ENCODE measurements at regions of chr2 and their contacts with region 1.

Region 1: DNA sequence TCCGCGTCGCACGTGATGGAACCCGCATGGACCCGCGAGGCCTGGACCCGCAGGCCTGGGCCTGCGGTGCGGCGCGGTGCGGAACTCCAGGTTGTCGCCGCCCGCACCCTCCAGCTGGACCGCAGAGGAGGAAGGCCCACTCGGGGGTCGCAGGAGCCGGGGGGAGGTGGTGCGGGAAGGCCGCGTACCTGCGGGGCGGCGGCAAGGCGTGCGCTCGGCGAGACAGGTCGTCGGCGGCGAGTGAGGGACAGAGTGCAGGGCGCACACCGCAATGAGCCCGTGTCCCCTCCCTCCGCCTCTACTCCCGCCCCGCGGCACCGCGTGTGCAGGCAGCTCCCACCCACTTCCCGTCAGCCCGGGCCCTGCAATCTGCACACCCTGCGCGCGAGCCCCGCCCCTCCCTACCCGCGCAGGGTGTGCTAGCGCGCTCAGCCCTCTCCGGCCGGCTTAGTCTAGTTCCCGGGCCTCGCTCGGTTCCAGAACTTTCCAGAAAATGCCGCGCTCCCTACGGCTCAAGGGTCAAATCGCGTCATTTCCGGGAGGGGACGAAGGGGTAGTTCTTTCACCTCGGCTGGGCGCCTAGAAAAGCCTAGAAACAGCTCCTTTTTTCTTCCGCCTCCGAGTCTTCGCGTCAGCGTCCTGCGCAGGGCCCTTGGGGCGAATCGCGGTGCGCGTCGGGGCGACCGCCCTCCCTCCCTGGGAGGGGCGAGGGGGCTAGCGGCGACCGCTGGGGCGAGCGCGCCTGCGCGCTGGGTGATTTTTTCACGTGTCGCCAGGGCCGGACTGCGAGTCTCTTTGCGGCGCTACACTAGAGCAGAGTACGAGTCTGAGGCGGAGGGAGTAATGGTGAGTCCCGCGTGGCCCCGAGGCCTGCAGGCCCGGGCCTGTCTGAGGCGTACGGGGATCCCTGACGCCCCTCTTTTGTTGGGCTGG is at the starts of genes HSPD1 and HSPE1:
- H3K4me3 ChIP-seq: peak within 1 kb of the TSS; percentile 93
- H3K27ac ChIP-seq: peak within 1 kb of the TSS; percentile 92
- H3K4me1 ChIP-seq: peaks cover 12% of the 10 kb centered on the region; the same call in 1 of the 2 replicates
- CTCF ChIP-seq: peak; percentile 70

Region 2: DNA sequence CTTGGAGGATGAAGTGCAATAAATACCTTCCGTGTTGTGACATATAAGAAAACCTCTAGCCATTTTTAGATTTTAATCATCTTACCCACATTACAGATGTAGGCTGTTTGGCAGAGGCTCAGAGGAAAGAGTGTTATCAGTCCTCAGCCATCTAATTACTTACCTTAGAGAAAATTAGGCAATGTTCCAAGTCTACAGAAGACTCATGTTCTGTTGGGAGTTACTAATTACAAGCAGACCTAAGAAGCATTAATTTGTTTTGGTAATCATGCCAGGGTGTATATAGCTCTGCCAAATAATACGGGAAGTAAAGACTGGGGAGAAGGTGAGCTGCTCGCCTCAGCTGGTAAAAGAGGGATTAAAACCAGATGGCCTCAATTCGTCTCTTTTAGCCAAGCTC is 447.5 kb before region 1 on chr2:
- CTCF ChIA-PET with region 1: no interaction called
- POLR2A ChIA-PET with region 1: no interaction called
- H3K4me3 ChIP-seq: no peak overlapping the region
- H3K27ac ChIP-seq: no peak overlapping the region
- H3K4me1 ChIP-seq: no peaks in the 10 kb centered on the region
- CTCF ChIP-seq: no peak

Region 3: DNA sequence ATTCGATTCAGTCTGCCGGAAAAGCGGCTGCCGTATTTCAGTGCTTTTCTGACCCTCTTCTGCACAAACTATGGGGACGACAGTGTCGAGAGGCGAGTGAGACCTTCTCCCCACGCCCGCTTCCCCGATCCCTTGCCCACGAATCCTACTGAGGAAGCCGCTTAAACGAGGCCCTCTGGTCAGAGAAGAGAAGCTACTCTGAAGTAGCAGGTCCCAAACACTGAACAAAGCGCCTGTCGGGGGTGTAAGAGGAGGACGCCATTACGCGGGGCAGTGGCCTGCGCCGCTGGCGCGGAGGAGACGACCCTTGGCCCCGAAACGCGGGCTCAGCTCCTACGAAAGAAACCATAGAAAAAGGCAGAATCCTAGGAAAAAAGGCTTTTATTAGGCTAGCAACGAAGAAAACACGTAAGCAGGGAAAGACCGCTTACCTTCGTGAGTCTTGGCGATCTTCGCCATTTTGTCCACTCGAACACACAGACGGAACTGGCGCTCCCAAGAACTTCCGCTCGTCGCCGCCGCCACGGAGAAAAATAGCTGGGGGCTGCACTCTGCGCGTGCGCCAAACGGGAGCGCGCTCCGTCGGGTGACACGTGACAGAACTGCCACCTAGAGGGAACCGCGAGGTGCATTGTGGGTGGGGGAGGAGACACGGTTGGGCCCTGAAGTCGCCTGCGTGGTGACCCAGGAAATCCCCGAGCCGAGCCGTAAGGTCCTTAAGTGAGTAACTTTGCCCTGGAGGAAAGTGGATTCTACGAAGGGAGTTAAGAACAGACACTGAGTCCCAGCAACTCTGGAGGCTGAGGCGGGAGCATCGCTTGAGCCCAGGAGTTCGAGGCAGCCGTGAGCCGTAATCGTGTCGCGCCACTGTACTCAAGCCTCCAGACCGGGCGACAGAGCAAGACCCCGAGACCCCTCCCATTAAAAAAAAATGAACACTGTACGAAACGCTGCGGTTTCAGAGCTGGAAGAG is 65.0 kb before region 1 on chr2 and contains the start of gene SF3B1:
- CTCF ChIA-PET with region 1: no interaction called
- POLR2A ChIA-PET with region 1: interaction called, 28 read pairs
- H3K4me3 ChIP-seq: peak within 1 kb of the TSS; percentile 94
- H3K27ac ChIP-seq: peak within 1 kb of the TSS; percentile 94
- H3K4me1 ChIP-seq: peaks cover 17% of the 10 kb centered on the region
- CTCF ChIP-seq: no peak

Region 4: DNA sequence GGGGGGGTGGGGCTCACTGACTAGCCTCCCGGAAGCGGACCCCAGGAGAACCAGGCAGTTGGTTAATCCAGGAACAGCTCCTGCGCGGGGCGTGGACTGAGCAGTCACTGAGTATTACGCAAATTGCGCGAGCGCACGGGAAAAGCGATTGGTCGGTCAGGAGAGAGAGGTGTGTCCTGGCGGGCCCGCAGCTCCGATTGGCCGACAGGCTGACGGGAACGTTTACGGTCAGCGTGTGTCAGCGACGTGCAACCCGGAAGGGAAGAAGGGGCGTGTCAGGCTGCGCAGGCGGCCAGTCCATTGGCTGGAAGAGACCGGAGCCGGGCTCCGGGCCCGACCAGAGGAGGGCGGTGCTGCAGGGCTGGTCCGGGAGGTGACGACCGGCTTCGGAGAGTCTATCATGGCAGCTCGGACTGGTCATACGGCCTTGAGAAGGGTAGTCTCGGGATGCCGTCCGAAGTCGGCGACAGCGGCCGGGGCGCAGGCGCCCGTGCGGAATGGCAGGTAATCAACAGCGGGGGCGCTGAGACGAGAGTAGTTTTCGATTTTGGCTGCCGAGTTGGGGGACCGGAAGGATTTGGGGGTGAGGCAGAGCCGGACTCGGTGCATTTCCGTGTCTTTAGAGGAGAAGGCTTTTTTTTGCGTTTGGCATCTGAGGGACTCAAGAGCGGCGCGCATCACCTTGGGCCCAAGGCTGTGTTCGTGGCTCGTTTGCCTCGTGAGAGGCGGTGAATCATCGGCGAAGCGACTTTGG is 46.5 kb before region 1 on chr2 and contains the start of gene COQ10B:
- CTCF ChIA-PET with region 1: no interaction called
- POLR2A ChIA-PET with region 1: interaction called, 35 read pairs
- H3K4me3 ChIP-seq: peak within 1 kb of the TSS; percentile 93
- H3K27ac ChIP-seq: peak within 1 kb of the TSS; percentile 93
- H3K4me1 ChIP-seq: no peaks in the 10 kb centered on the region
- CTCF ChIP-seq: peak; percentile 92

Region 5: DNA sequence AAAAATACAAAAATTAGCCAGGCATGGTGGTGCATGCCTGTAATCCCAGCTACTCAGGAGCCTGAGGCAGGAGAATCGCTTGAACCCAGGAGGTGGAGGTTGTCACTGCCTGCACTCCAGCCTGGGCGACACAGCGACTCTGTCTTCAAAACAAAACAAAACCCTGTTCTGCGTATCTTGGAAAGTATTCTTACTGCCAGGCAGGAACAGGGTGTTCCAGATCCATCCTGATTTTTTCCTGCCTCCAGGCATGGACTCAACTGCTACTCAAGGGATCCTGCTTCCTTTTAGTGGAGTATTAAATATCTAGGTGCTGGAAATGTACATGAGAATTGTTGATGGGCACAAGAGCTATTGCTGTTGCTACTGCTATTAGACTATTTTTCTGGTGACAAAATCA is 12.5 kb before region 1 on chr2:
- CTCF ChIA-PET with region 1: no interaction called
- POLR2A ChIA-PET with region 1: interaction called, 17 read pairs
- H3K4me3 ChIP-seq: no peak overlapping the region
- H3K27ac ChIP-seq: no peak overlapping the region
- H3K4me1 ChIP-seq: no peaks in the 10 kb centered on the region
- CTCF ChIP-seq: no peak

Region 6: DNA sequence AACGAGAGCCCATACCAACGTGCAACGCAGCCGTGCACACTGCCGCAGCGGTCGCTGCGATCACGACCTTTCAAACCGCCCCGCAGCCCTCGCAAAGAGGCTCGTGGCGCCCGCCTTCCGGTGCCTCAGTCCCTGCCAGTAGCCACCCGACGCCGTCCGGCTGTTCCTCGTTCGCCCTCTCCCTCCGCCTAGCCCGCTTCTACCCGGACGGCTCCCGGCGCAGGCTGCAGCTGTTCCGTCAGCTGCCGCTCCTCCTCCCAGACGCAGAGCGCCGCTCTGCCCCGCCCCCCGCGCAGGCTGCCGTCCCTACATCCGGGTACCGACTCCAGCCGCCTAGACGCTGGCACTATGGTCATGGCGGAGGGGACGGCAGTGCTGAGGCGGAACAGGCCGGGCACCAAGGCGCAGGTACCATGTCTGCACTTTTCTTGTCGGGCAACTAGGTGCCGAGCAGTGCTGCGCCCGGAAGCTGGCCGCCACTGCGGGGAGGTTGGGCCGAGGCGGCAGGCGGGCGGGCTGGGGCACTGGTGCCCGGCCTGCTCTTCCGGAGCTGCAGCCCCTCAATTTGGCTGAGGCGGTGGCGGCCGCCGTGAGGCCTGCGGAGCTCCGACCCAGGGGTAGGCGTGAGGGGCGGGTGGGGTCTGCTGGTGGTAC is 16.0 kb after region 1 on chr2 and contains the start of gene MOB4:
- CTCF ChIA-PET with region 1: interaction called, 4 read pairs
- POLR2A ChIA-PET with region 1: interaction called, 85 read pairs
- H3K4me3 ChIP-seq: peak within 1 kb of the TSS; percentile 99
- H3K27ac ChIP-seq: peak within 1 kb of the TSS; percentile 87
- H3K4me1 ChIP-seq: peaks cover 2% of the 10 kb centered on the region; the same call in 1 of the 2 replicates
- CTCF ChIP-seq: peak; percentile 72

Region 7: DNA sequence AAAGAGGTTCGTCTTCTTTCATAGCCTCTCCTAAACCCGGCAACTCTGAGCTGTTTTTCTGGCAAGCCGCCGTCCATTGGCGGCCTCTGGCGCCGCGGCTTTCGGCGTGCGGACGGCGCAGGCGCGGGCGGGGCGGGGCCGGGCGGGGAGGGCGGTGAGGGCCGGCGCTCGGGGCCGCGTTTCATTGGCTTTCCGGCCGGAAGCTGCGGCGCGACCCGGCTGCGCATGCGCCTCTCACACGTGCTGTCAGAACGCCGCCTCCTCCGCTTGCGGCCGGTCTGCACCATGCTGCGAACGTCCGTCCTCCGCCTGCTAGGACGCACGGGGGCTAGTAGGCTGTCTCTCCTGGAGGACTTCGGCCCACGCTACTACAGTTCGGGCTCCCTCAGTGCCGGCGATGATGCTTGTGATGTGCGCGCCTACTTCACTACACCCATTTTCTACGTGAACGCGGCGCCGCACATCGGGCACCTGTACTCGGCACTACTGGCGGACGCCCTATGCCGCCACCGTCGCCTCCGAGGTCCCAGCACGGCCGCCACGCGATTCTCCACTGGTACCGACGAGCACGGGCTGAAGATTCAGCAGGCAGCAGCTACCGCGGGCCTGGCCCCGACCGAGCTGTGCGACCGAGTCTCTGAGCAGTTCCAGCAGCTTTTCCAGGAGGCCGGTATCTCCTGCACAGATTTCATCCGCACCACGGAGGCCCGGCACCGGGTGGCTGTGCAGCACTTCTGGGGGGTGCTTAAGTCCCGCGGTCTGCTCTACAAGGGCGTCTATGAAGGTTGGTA is 205.5 kb after region 1 on chr2 and contains the start of gene MARS2:
- CTCF ChIA-PET with region 1: no interaction called
- POLR2A ChIA-PET with region 1: interaction called, 23 read pairs
- H3K4me3 ChIP-seq: peak within 1 kb of the TSS; percentile 85
- H3K27ac ChIP-seq: peak within 1 kb of the TSS; percentile 66; the same call in 1 of the 2 replicates
- H3K4me1 ChIP-seq: peaks cover 6% of the 10 kb centered on the region; the same call in 1 of the 2 replicates
- CTCF ChIP-seq: peak; percentile 59; the same call in 1 of the 2 replicates

Measured in HEK293 (cell line).